ENCODE measurements at regions of chr1 and their contacts with region 1.

Region 1: DNA sequence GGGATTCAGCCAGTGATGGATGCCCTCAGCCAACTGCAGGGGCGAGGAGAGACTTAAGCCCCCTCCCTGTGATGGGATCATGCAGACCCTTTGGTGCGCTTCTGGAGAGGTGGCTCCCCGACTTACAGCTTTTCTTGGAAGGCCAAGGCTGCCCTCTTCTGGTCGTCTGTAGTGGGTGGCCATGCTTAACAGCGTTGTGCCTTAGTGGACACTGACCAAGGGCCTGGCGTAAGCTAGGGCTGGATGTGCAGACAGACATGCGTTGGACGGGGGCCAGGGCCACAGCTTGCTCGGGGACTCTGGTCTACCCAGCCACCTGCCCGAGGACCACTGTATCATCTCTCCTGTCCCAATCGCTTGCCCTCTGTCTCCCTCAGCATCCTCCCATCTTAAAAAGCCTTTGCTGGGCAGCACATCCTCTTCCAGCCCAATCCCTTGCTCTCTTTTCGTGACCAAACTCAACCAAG is 5.5 kb downstream of the AZIN2 start:
- DNase-seq: peak; percentile 80
- H3K4me3 ChIP-seq: no peak overlapping the region; a peak in 1 of 4 replicates
- H3K27ac ChIP-seq: no peak overlapping the region
- H3K4me1 ChIP-seq: peaks cover 5 to 14% of the 10 kb centered on the region in 2 experiments; a peak in 1 of 4 replicates
- H3K27me3 ChIP-seq: no peaks in the 10 kb centered on the region
- CTCF ChIP-seq: peak; percentile 80
- EP300 ChIP-seq: no peak
- RAD21 ChIP-seq: peak; percentile 93

Region 2: DNA sequence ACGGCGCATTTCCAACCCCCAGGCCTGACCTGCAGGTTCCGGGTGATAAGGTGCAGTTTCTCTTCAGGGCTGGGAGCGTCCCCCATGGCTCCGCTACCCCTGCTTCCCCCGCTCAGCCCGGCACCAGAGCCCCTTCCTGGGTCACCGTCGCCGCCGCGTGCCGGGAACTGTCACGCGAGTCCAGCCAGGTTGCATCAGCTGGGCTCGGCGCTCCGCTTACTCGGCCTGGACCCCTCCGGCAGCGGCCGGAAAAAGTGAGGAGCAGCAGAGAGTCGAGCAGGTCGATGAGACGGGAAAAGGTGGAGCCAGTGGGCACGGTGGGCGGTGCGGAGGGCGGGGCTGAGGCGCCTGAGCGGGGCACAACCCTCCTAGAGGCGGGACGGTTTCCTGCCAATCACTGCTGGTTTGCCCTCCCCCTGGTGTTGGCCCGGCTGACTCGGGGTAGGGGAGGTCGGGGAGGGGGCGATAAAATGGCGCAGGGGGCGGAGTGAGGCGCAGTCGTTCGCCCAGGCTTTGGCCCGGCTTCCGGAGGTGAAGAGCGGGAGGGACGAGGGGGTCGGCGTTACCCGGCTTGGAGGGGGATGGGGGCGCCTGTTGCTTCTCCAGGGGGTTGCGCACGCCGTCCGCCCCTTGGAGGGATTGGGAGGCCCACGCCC is 269.1 kb before region 1 on chr1 and contains the starts of genes S100PBP and YARS1:
- CTCF ChIA-PET with region 1: interaction called, 10 read pairs
- POLR2A ChIA-PET with region 1: no interaction called
- DNase-seq: peak; percentile 99
- H3K4me3 ChIP-seq: peak within 1 kb of the TSS; percentile 78 to 98
- H3K27ac ChIP-seq: peak within 1 kb of the TSS; percentile 91 to 93
- H3K4me1 ChIP-seq: peaks cover 9 to 10% of the 10 kb centered on the region in 2 experiments; a peak in 2 of 4 replicates
- H3K27me3 ChIP-seq: no peaks in the 10 kb centered on the region
- CTCF ChIP-seq: no peak
- EP300 ChIP-seq: peak; percentile 53 to 56; a peak in 2 of 4 replicates
- RAD21 ChIP-seq: no peak
- polyA plus RNA-seq, gene S100PBP: 13.2 and 19.2 TPM in 2 replicates
- polyA plus RNA-seq, gene YARS1: 31.9 and 46.3 TPM in 2 replicates

Region 3: GRCh38 chr1:32870615-32871363 is 215.6 kb before region 1 on chr1 and contains the start of gene FNDC5:
- CTCF ChIA-PET with region 1: interaction called, 44 read pairs
- POLR2A ChIA-PET with region 1: no interaction called
- DNase-seq: peak; percentile 89
- H3K4me3 ChIP-seq: peak within 1 kb of the TSS in 1 of 2 experiments; percentile 46; a peak in 3 of 4 replicates
- H3K27ac ChIP-seq: no peak within 1 kb of the TSS
- H3K4me1 ChIP-seq: peaks cover 0 to 13% of the 10 kb centered on the region in 2 experiments; a peak in 1 of 4 replicates
- H3K27me3 ChIP-seq: no peaks in the 10 kb centered on the region
- CTCF ChIP-seq: no peak
- EP300 ChIP-seq: no peak
- RAD21 ChIP-seq: no peak
- polyA plus RNA-seq, gene FNDC5: 0.59 and 0.94 TPM in 2 replicates

Region 4: DNA sequence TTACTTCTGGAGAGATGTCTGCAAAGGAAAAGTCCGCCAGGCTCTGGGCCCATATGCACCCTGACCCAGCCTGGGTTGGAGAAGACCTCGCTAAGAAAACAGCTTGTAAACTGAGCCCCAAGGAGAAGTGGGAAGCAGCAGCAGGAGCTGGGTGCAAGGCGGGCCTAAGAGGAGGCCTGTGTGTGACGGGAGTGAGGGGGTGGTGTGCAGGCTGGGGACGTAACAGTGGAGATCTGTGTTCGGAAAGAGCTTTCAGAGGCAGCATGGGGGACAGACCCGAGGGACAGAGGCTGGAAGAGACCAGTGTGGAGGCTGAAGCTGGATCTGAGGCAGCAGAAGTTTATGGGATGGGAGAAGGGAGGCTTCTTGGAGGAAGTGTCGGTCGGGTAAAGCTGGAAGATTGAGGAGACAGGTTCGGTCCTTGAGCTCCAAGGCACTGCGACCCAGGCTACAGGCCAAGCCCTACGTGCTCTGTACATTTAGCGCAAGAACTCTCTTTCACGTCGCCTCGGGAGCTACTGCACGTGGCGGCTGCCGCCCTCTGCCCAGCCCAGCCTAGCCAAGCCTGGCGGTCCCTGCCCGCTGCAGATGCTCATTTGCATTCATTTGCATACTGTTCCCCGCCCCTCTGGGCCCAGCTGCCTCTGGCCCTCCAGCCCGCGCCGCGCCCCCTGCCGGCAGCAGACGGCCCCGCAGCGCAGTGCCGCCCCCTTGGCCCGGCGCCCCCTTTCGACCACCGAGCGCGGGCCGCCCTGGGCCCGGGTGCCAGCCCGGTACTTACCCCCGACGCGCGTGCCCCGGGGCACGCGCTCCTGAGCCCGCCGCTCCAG is 193.8 kb before region 1 on chr1:
- CTCF ChIA-PET with region 1: interaction called, 13 read pairs
- POLR2A ChIA-PET with region 1: interaction called, 3 read pairs
- DNase-seq: peak; percentile 92
- H3K4me3 ChIP-seq: peak overlapping the region in 1 of 2 experiments; percentile 14; a peak in 3 of 4 replicates
- H3K27ac ChIP-seq: no peak overlapping the region
- H3K4me1 ChIP-seq: peaks cover 0 to 4% of the 10 kb centered on the region in 2 experiments; a peak in 2 of 4 replicates
- H3K27me3 ChIP-seq: 0 out of 2 replicates have a peak, but pooled peaks cover 5% of the 10 kb centered on the region
- CTCF ChIP-seq: peak; percentile 56
- EP300 ChIP-seq: no peak
- RAD21 ChIP-seq: no peak

Region 5: DNA sequence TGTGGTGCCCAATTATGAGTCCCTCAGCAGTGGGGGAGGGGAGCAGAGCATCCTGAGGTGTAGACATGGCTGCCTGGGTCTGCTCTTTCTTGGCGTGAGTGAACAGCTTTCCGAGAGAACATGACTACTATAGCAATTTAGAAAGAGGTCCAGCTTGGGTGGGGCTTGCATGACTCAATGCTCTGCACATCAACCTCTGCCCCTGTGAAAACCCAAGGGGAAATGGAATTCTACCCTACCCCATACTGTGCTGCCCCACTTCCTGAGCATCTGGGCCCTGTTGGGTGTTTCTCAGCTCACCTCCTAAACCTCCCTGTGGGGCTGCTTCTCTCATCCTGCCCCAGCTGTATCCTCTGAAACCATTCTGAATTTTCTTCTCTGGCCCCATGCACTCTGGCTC is 13.7 kb before region 1 on chr1:
- CTCF ChIA-PET with region 1: interaction called, 19 read pairs
- POLR2A ChIA-PET with region 1: no interaction called
- DNase-seq: no peak
- H3K4me3 ChIP-seq: no peak overlapping the region
- H3K27ac ChIP-seq: no peak overlapping the region
- H3K4me1 ChIP-seq: no peaks in the 10 kb centered on the region
- H3K27me3 ChIP-seq: no peaks in the 10 kb centered on the region; the same call in 1 of the 2 replicates
- CTCF ChIP-seq: no peak
- EP300 ChIP-seq: no peak
- RAD21 ChIP-seq: no peak

Region 6: DNA sequence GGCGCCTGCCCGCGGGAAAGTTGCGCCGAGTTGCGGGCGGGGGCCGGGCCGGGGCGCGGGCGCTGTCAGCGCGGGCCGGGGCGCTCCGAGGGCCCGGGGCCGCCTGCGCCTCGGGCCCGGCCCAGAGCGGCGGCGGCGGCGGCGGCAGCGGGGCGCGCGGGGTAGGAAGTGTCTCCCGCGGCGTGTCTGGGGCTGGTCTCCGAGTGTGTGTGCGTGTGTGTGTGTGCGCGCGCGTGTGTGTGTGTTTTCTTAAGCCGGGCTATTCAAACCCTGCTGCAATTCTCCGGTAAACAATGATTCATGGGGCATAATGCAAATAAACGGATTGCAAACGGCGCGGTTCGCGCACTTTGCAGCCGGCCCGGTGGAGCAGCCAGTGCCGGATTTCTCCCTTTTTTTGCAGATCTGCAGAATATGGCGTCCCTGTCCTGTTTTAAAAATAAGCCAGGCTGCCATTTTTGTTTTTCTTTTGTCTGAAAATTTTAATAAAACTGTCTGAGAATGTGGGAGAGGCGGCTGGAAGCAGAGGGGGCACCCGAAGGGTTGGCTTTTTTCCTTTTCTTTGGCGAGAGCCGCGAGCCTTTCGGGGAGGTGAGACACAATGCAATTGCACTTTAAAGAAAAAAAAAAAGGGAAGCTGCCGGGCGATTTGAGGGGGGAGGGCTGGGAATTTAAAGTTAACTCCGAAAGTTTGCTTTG is 170.4 kb after region 1 on chr1:
- CTCF ChIA-PET with region 1: no interaction called
- POLR2A ChIA-PET with region 1: no interaction called
- DNase-seq: no peak
- H3K4me3 ChIP-seq: peak overlapping the region; percentile 73 to 86
- H3K27ac ChIP-seq: peak overlapping the region; percentile 84 to 94
- H3K4me1 ChIP-seq: peaks cover 16 to 45% of the 10 kb centered on the region in 2 experiments; a peak in 3 of 4 replicates
- H3K27me3 ChIP-seq: no peaks in the 10 kb centered on the region
- CTCF ChIP-seq: no peak
- EP300 ChIP-seq: no peak
- RAD21 ChIP-seq: no peak

Region 7: GRCh38 chr1:33268927-33269610 is 182.7 kb after region 1 on chr1:
- CTCF ChIA-PET with region 1: no interaction called
- POLR2A ChIA-PET with region 1: no interaction called
- DNase-seq: no peak
- H3K4me3 ChIP-seq: no peak overlapping the region
- H3K27ac ChIP-seq: no peak overlapping the region
- H3K4me1 ChIP-seq: peaks cover 0 to 2% of the 10 kb centered on the region in 2 experiments; a peak in 1 of 4 replicates
- H3K27me3 ChIP-seq: no peaks in the 10 kb centered on the region
- CTCF ChIP-seq: no peak
- EP300 ChIP-seq: no peak
- RAD21 ChIP-seq: no peak

Region 8: GRCh38 chr1:33392639-33393038 is 306.2 kb after region 1 on chr1:
- CTCF ChIA-PET with region 1: no interaction called
- POLR2A ChIA-PET with region 1: no interaction called
- DNase-seq: peak; percentile 60
- H3K4me3 ChIP-seq: no peak overlapping the region; a peak in 1 of 4 replicates
- H3K27ac ChIP-seq: no peak overlapping the region
- H3K4me1 ChIP-seq: peaks cover 0 to 24% of the 10 kb centered on the region in 2 experiments; a peak in 3 of 4 replicates
- H3K27me3 ChIP-seq: no peaks in the 10 kb centered on the region
- CTCF ChIP-seq: no peak
- EP300 ChIP-seq: no peak
- RAD21 ChIP-seq: no peak

Measured in SK-N-SH (cell line).